HEK293T (cell line): ENCODE measurements at regions of chr1 and their contacts with region 1.

Region 1: GRCh38 chr1:206663832-206664652 is 20.7 kb upstream of the MAPKAPK2 start:
- DNase-seq: peak; percentile 82

Region 2: DNA sequence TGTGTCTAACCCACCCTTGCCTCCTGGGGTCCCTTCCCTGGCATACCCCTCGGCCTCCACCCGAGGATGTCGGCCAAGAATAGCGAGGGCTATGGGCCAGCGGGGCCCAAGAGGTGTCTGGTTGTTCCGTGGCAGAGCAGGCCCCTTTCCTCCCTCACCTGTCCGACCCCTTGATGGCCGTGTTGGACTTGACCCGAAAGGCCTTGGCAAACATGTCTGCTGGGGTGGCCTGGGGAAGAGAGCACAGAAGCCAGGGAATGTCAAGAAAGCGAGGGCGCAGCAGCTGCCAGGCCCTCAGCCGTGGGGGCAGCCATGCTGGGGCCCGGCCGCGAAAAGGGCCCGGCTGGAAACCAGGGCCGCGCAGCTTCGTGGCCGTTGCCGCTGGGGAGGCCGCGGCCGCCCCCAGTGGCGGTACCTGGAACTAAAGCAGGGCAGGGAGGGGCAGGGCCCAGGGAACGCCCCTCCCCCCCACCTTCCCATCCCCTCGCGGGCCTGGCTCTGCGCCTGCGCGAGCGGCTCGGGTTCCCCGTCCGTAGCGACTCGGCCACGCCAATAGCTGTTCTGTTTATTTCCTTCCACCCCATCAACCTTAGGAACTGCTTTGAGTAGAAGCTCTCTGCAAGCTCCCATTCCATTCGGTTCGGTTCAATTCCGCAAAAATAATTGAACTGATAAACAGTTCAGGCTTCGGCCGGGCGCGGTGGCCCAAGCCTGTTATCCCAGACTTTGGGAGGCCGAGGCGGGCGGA is 51.7 kb before region 1 on chr1 and contains the start of gene EIF2D:
- CTCF ChIA-PET with region 1: interaction called, 10 read pairs
- POLR2A ChIA-PET with region 1: interaction called, 4 read pairs
- DNase-seq: peak; percentile 100